K562 (cell line): ENCODE measurements at regions of chr1 and their contacts with region 1.

Region 1: DNA sequence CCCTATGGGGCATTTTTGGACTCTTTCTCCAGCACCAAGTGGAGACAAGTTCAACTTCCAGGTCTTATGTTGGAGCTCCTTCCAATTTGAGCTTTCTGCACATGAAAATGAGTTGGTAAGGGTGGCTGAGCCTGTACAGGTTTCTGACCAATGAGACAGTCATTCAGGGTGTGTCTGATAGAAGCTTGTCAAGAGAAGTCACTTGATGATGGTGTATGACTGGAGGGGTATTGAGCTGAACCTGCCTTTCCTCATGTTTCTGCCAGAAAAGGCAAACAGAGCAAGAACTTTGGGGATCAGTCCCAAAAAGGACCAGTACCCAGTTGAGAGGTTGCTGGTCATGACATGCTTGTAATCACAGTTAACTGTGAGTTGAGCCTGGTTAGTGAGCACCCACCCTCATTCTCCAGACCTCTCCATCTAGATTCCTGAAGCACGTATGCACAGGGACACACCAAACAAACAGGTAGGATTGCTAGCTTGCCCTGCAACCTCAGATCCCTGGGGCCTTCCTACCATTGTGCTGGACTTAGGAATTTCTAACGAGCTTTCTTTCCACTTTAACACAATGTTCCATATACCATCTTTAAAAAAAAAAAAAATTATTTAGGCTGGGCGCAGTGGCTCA is 26.5 kb downstream of the FAM89A start:
- DNase-seq: no peak
- ATAC-seq: no peak
- H3K4me3 ChIP-seq: no peak overlapping the region
- H3K27ac ChIP-seq: no peak overlapping the region
- H3K4me1 ChIP-seq: no peaks in the 10 kb centered on the region
- H3K27me3 ChIP-seq: no peaks in the 10 kb centered on the region; a peak in 1 of 5 replicates
- CTCF ChIP-seq: no peak
- EP300 ChIP-seq: no peak
- POLR2A ChIP-seq: no peak
- RAD21 ChIP-seq: no peak

Region 2: GRCh38 chr1:231001892-231002291 is 11.6 kb before region 1 on chr1:
- CTCF ChIA-PET with region 1: no interaction called
- POLR2A ChIA-PET with region 1: interaction called, 10 read pairs
- in situ Hi-C with region 1: no loop called
- intact Hi-C with region 1: no loop called
- DNase-seq: no peak
- ATAC-seq: no peak
- H3K4me3 ChIP-seq: no peak overlapping the region
- H3K27ac ChIP-seq: no peak overlapping the region
- H3K4me1 ChIP-seq: no peaks in the 10 kb centered on the region
- H3K27me3 ChIP-seq: no peaks in the 10 kb centered on the region
- CTCF ChIP-seq: no peak
- EP300 ChIP-seq: no peak
- POLR2A ChIP-seq: no peak
- RAD21 ChIP-seq: no peak

Region 3: GRCh38 chr1:231301990-231302389 is 288.5 kb after region 1 on chr1:
- CTCF ChIA-PET with region 1: no interaction called
- POLR2A ChIA-PET with region 1: no interaction called
- in situ Hi-C with region 1: no loop called
- intact Hi-C with region 1: no loop called
- DNase-seq: no peak
- ATAC-seq: no peak
- H3K4me3 ChIP-seq: no peak overlapping the region
- H3K27ac ChIP-seq: no peak overlapping the region
- H3K4me1 ChIP-seq: no peaks in the 10 kb centered on the region
- H3K27me3 ChIP-seq: no peaks in the 10 kb centered on the region; a peak in 1 of 5 replicates
- CTCF ChIP-seq: no peak
- EP300 ChIP-seq: no peak
- POLR2A ChIP-seq: no peak
- RAD21 ChIP-seq: no peak